Naive thymus-derived CD4-positive, alpha-beta T cell (primary cell): ENCODE measurements at regions of chr2 and their contacts with region 1.

Region 1: DNA sequence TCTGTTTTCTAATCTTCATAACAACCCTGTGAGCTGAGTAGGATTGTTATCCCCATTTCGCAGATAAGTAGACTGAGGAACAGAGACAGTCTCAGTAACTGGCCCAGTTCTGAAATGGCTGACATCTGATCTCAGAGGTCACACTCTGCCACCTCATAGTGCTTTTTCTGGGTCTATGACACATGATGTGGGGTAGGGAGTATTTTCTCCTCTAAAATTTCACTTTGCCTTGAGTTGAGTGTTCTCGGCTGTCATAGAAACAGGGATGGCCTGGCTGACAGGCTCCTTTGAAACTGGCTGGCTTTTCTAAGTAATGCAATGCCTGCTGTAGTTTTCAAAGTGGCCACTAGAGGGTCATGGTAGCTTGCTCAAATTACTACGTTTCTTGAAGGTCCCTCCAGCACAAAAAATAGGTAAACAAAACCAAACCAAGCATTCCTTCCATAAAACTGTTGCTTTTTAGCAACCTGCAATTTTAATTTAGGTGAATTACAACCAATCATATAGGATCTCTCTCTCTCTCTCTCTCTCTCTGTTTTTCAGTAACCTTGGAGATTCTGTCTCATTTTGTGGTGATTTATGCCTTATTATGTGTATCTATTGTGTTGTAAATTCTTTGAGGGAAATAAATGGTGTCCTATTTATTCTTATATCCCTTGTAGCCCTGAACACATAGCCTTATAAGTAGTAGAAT is 84.2 kb upstream of the TTN start:
- DNase-seq: peak; percentile 9 to 65 (median 49)
- ATAC-seq: peak; percentile 83
- H3K4me3 ChIP-seq: no peak overlapping the region
- H3K4me3 Mint-ChIP-seq: no peak overlapping the region
- H3K27ac ChIP-seq: no peak overlapping the region
- H3K27ac Mint-ChIP-seq: no peak overlapping the region
- H3K4me1 ChIP-seq: no peaks in the 10 kb centered on the region
- H3K4me1 Mint-ChIP-seq: peaks cover 5 to 17% (median 7%) of the 10 kb centered on the region in 7 donors
- H3K27me3 ChIP-seq: no peaks in the 10 kb centered on the region
- H3K27me3 Mint-ChIP-seq: no peaks in the 10 kb centered on the region

Region 2: DNA sequence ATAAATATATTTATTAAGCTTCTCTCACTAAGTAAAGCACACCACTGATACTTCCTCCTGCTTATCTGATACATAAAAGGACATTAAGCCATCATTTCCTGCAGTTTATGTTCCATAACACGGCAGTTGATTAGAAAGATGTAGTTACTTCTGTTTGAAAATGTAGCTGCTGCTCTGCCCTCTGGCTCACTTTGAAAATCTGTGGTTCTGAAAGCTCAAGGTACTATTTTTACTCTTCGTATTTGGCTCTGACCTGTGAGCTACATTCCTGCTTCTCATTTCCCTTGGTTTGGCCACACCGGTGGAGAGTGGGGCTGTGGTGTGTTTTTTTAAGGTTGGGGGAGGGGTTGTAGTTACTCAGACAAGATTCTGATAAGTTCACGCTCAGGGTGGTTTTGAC is 71.4 kb before region 1 on chr2:
- CTCF ChIA-PET with region 1: no interaction called
- POLR2A ChIA-PET with region 1: interaction called, 3 read pairs
- intact Hi-C with region 1: loop called in 1 of 2 experiments (anchors 5 kb)
- DNase-seq: peak in 4 of 9 donors; percentile 4 to 17 (median 8)
- ATAC-seq: no peak
- H3K4me3 ChIP-seq: no peak overlapping the region
- H3K4me3 Mint-ChIP-seq: peak overlapping the region in 9 of 10 donors; percentile 57 to 84 (median 75)
- H3K27ac ChIP-seq: no peak overlapping the region
- H3K27ac Mint-ChIP-seq: peak overlapping the region; percentile 59 to 90 (median 82)
- H3K4me1 ChIP-seq: no peaks in the 10 kb centered on the region
- H3K4me1 Mint-ChIP-seq: peaks cover 6 to 34% (median 24%) of the 10 kb centered on the region in 7 donors
- H3K27me3 ChIP-seq: no peaks in the 10 kb centered on the region
- H3K27me3 Mint-ChIP-seq: no peaks in the 10 kb centered on the region

Region 3: GRCh38 chr2:179020156-179020750 is 128.8 kb after region 1 on chr2:
- CTCF ChIA-PET with region 1: interaction called, 4 read pairs
- POLR2A ChIA-PET with region 1: no interaction called
- intact Hi-C with region 1: loop called (anchors 1 to 2 kb)
- DNase-seq: peak in 7 of 9 donors; percentile 17 to 44 (median 34)
- ATAC-seq: peak; percentile 80
- H3K4me3 ChIP-seq: no peak overlapping the region
- H3K4me3 Mint-ChIP-seq: no peak overlapping the region
- H3K27ac ChIP-seq: no peak overlapping the region
- H3K27ac Mint-ChIP-seq: no peak overlapping the region
- H3K4me1 ChIP-seq: peaks cover 0 to 10% of the 10 kb centered on the region in 2 donors
- H3K4me1 Mint-ChIP-seq: peaks cover 7 to 37% (median 27%) of the 10 kb centered on the region in 7 donors
- H3K27me3 ChIP-seq: no peaks in the 10 kb centered on the region
- H3K27me3 Mint-ChIP-seq: no peaks in the 10 kb centered on the region

Region 4: GRCh38 chr2:179422037-179422643 is 530.7 kb after region 1 on chr2:
- CTCF ChIA-PET with region 1: no interaction called
- POLR2A ChIA-PET with region 1: no interaction called
- intact Hi-C with region 1: no loop called
- DNase-seq: peak in 3 of 9 donors; percentile 2 to 37 (median 3)
- ATAC-seq: peak; percentile 57
- H3K4me3 ChIP-seq: no peak overlapping the region
- H3K4me3 Mint-ChIP-seq: no peak overlapping the region
- H3K27ac ChIP-seq: no peak overlapping the region
- H3K27ac Mint-ChIP-seq: no peak overlapping the region
- H3K4me1 ChIP-seq: no peaks in the 10 kb centered on the region
- H3K4me1 Mint-ChIP-seq: peaks cover 0 to 2% (median 0%) of the 10 kb centered on the region in 7 donors
- H3K27me3 ChIP-seq: no peaks in the 10 kb centered on the region
- H3K27me3 Mint-ChIP-seq: peaks cover 8 to 36% (median 16%) of the 10 kb centered on the region in 5 donors

Region 5: GRCh38 chr2:179440642-179441251 is 549.3 kb after region 1 on chr2:
- CTCF ChIA-PET with region 1: no interaction called
- POLR2A ChIA-PET with region 1: no interaction called
- intact Hi-C with region 1: loop called in 1 of 2 experiments (anchors 1 kb)
- DNase-seq: peak in 6 of 9 donors; percentile 10 to 40 (median 30)
- ATAC-seq: no peak
- H3K4me3 ChIP-seq: no peak overlapping the region
- H3K4me3 Mint-ChIP-seq: no peak overlapping the region
- H3K27ac ChIP-seq: no peak overlapping the region
- H3K27ac Mint-ChIP-seq: no peak overlapping the region
- H3K4me1 ChIP-seq: no peaks in the 10 kb centered on the region
- H3K4me1 Mint-ChIP-seq: no peaks in the 10 kb centered on the region
- H3K27me3 ChIP-seq: no peaks in the 10 kb centered on the region
- H3K27me3 Mint-ChIP-seq: peaks cover 13 to 39% (median 26%) of the 10 kb centered on the region in 5 donors